ENCODE measurements at regions of chr15 and their contacts with region 1.

Region 1: GRCh38 chr15:40344631-40345120 is 3.9 kb upstream of the CCDC9B start:
- DNase-seq: peak; percentile 85
- H3K4me3 Mint-ChIP-seq: no peak overlapping the region
- H3K27ac Mint-ChIP-seq: no peak overlapping the region
- H3K4me1 Mint-ChIP-seq: no peaks in the 10 kb centered on the region
- H3K27me3 Mint-ChIP-seq: no peaks in the 10 kb centered on the region

Region 2: GRCh38 chr15:40092256-40092978 is 252.3 kb before region 1 on chr15:
- CTCF ChIA-PET with region 1: no interaction called
- intact Hi-C with region 1: no loop called
- DNase-seq: no peak
- H3K4me3 Mint-ChIP-seq: no peak overlapping the region
- H3K27ac Mint-ChIP-seq: no peak overlapping the region
- H3K4me1 Mint-ChIP-seq: peaks cover 26% of the 10 kb centered on the region
- H3K27me3 Mint-ChIP-seq: no peaks in the 10 kb centered on the region

Region 3: GRCh38 chr15:40307421-40308211 is 37.1 kb before region 1 on chr15 and contains the start of gene PLCB2:
- CTCF ChIA-PET with region 1: interaction called, 448 read pairs
- intact Hi-C with region 1: loop called (anchors 5 kb)
- DNase-seq: peak; percentile 77
- H3K4me3 Mint-ChIP-seq: peak within 1 kb of the TSS; percentile 97
- H3K27ac Mint-ChIP-seq: peak within 1 kb of the TSS; percentile 96
- H3K4me1 Mint-ChIP-seq: peaks cover 29% of the 10 kb centered on the region
- H3K27me3 Mint-ChIP-seq: no peaks in the 10 kb centered on the region
- total RNA-seq, gene PLCB2: 55.0 to 56.7 TPM

Region 4: GRCh38 chr15:40357723-40358470 is 13.2 kb after region 1 on chr15 and contains the start of gene DISP2:
- CTCF ChIA-PET with region 1: interaction called, 23 read pairs
- intact Hi-C with region 1: no loop called
- DNase-seq: peak; percentile 90
- H3K4me3 Mint-ChIP-seq: peak within 1 kb of the TSS; percentile 72
- H3K27ac Mint-ChIP-seq: no peak within 1 kb of the TSS
- H3K4me1 Mint-ChIP-seq: peaks cover 2% of the 10 kb centered on the region
- H3K27me3 Mint-ChIP-seq: peaks cover 5% of the 10 kb centered on the region
- total RNA-seq, gene DISP2: 0.02 TPM in 1 of 2 experiments, not detected in the other

Region 5: DNA sequence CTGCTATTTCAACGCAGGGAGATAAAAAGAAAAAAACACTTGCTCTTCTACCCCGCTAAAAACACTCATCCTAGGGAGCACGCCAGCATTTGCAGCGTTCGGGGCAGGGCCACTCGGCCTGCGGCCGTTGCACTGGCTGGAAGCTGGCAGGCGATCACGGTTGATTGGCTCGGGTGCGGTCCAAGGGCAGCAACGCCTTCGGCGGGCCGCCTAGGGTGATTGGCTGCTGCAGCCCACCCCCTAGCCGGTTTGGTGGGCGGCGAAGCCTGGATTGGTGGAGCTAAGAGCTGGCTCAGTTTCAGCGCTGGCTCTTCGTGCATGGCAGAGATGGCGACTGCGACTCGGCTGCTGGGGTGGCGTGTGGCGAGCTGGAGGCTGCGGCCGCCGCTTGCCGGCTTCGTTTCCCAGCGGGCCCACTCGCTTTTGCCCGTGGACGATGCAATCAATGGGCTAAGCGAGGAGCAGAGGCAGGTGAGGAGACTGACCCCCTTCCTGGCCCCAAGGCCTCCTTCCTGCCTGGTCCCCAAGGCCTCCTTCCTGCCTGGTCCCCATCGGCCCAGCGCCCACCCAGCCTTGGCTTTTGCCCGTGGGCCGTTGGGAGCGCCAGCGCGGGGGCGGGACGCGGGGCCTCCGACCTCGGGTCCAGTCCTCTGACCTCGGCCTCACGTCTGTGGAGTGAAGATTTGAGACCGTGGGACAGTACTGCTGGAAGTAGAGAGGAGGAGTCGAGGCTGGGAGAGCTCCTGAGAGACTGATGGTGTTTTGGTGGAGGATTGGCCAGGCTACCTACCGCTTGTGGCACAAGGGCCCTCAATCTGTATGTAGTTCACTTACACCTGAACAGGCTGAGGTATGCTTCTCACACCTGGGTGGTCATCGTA is 61.1 kb after region 1 on chr15 and contains the start of gene IVD:
- CTCF ChIA-PET with region 1: interaction called, 20 read pairs
- intact Hi-C with region 1: no loop called
- DNase-seq: peak; percentile 94
- H3K4me3 Mint-ChIP-seq: peak within 1 kb of the TSS; percentile 83
- H3K27ac Mint-ChIP-seq: peak within 1 kb of the TSS; percentile 71
- H3K4me1 Mint-ChIP-seq: peaks cover 56% of the 10 kb centered on the region
- H3K27me3 Mint-ChIP-seq: no peaks in the 10 kb centered on the region
- total RNA-seq, gene IVD: 33.1 to 34.1 TPM

Region 6: GRCh38 chr15:40506964-40507571 is 162.4 kb after region 1 on chr15:
- CTCF ChIA-PET with region 1: interaction called, 5 read pairs
- intact Hi-C with region 1: loop called (anchors 2 kb)
- DNase-seq: peak; percentile 75
- H3K4me3 Mint-ChIP-seq: no peak overlapping the region
- H3K27ac Mint-ChIP-seq: no peak overlapping the region
- H3K4me1 Mint-ChIP-seq: peaks cover 9% of the 10 kb centered on the region
- H3K27me3 Mint-ChIP-seq: peaks cover 34% of the 10 kb centered on the region